ENCODE measurements at regions of chr10 and their contacts with region 1.

Region 1: DNA sequence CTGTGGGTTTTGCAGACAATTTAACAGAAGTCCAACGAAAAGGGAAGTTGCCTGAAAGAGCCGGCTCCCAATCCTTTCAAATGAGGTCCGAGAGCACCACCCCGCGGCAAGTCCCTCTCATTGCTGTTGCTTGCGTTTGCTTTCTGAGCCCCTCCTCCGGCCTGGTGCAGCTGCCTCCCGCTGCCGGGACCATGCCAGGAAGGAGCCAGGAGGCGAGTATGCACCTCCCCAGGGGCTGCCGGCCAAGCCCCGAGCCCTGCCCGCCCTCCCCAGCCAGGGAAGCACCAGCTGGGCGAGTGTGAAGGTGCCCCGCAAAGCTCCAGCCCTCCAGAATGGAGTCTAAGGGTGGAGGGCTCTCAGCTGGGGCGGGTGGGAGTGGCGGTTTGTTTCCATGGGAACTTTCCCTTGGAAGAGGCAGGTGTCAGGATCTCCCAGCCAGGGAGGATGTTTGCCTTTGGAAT is 25.8 kb upstream of the PPP2R2D start:
- DNase-seq: peak; percentile 89
- H3K4me3 ChIP-seq: no peak overlapping the region
- H3K27ac ChIP-seq: no peak overlapping the region
- H3K4me1 ChIP-seq: no peaks in the 10 kb centered on the region
- H3K27me3 ChIP-seq: peaks cover 12% of the 10 kb centered on the region

Region 2: GRCh38 chr10:130179640-130180039 is 1695.4 kb before region 1 on chr10:
- in situ Hi-C with region 1: loop called (anchors 10 kb)
- DNase-seq: peak; percentile 85
- H3K4me3 ChIP-seq: no peak overlapping the region
- H3K27ac ChIP-seq: peak overlapping the region; percentile 13; the same call in 1 of the 2 replicates
- H3K4me1 ChIP-seq: no peaks in the 10 kb centered on the region
- H3K27me3 ChIP-seq: no peaks in the 10 kb centered on the region

Region 3: GRCh38 chr10:132142411-132143161 is 267.6 kb after region 1 on chr10:
- in situ Hi-C with region 1: loop called (anchors 25 kb)
- DNase-seq: peak; percentile 48
- H3K4me3 ChIP-seq: no peak overlapping the region
- H3K27ac ChIP-seq: no peak overlapping the region
- H3K4me1 ChIP-seq: no peaks in the 10 kb centered on the region
- H3K27me3 ChIP-seq: no peaks in the 10 kb centered on the region; the same call in 1 of the 2 replicates